ENCODE measurements at regions of chr3 and their contacts with region 1.

Region 1: GRCh38 chr3:30342319-30343060 is 263.9 kb upstream of the TGFBR2 start:
- DNase-seq: peak; percentile 99
- ATAC-seq: peak; percentile 64
- H3K4me3 ChIP-seq: peak overlapping the region; percentile 28; the same call in 1 of the 2 replicates
- H3K27ac ChIP-seq: peak overlapping the region; percentile 98
- H3K4me1 ChIP-seq: peaks cover 59% of the 10 kb centered on the region
- H3K27me3 ChIP-seq: no peaks in the 10 kb centered on the region
- CTCF ChIP-seq: no peak

Region 2: GRCh38 chr3:30122359-30122758 is 220.1 kb before region 1 on chr3:
- CTCF ChIA-PET with region 1: no interaction called
- POLR2A ChIA-PET with region 1: no interaction called
- intact Hi-C with region 1: no loop called
- DNase-seq: no peak
- ATAC-seq: no peak
- H3K4me3 ChIP-seq: no peak overlapping the region
- H3K27ac ChIP-seq: no peak overlapping the region
- H3K4me1 ChIP-seq: no peaks in the 10 kb centered on the region
- H3K27me3 ChIP-seq: no peaks in the 10 kb centered on the region
- CTCF ChIP-seq: no peak

Region 3: GRCh38 chr3:30292192-30292893 is 50.1 kb before region 1 on chr3:
- CTCF ChIA-PET with region 1: no interaction called
- POLR2A ChIA-PET with region 1: no interaction called
- intact Hi-C with region 1: loop called (anchors 2 kb)
- DNase-seq: peak; percentile 86
- ATAC-seq: peak; percentile 88
- H3K4me3 ChIP-seq: 0 out of 2 replicates have a peak overlapping the region, but pooled peaks have one; percentile 9
- H3K27ac ChIP-seq: peak overlapping the region; percentile 86
- H3K4me1 ChIP-seq: peaks cover 34% of the 10 kb centered on the region
- H3K27me3 ChIP-seq: no peaks in the 10 kb centered on the region
- CTCF ChIP-seq: no peak

Region 4: GRCh38 chr3:30324587-30324986 is 17.9 kb before region 1 on chr3:
- CTCF ChIA-PET with region 1: no interaction called
- POLR2A ChIA-PET with region 1: interaction called, 3 read pairs
- intact Hi-C with region 1: loop called (anchors 1 kb)
- DNase-seq: peak; percentile 90
- ATAC-seq: peak; percentile 98
- H3K4me3 ChIP-seq: 0 out of 2 replicates have a peak overlapping the region, but pooled peaks have one; percentile 5
- H3K27ac ChIP-seq: peak overlapping the region; percentile 91
- H3K4me1 ChIP-seq: peaks cover 17% of the 10 kb centered on the region
- H3K27me3 ChIP-seq: no peaks in the 10 kb centered on the region
- CTCF ChIP-seq: no peak

Region 5: DNA sequence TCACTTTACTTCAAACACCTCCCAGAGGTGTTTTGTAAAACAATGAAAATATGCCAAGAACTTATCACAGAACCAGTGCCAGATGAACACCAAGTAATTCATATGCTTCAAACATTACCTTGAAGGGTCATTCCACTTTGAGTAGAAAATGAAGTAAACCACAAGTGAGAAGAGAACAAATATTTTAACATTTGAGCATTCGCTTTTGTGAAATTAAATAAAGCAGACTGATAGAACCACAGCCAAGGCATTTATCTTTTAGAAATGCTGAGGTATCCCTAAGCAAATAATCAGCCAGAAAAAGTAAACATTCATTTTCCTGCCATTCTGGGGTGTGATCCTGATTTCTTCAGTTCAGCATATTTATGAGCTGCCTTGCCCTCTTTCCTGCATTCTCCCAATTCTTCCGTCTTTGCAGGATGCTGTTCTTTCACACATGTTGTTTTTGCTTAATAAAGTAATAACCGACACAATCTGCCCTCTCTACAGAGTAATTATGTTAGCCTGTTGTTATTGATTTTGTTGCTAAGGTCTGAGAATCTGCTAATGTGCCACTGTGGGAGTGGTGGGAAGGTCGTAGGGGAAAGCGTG is 28.3 kb after region 1 on chr3:
- CTCF ChIA-PET with region 1: no interaction called
- POLR2A ChIA-PET with region 1: interaction called, 3 read pairs
- intact Hi-C with region 1: loop called (anchors 2 kb)
- DNase-seq: peak; percentile 83
- ATAC-seq: peak; percentile 94
- H3K4me3 ChIP-seq: no peak overlapping the region
- H3K27ac ChIP-seq: peak overlapping the region; percentile 39
- H3K4me1 ChIP-seq: peaks cover 30% of the 10 kb centered on the region
- H3K27me3 ChIP-seq: no peaks in the 10 kb centered on the region
- CTCF ChIP-seq: no peak

Region 6: GRCh38 chr3:30538787-30539186 is 196.3 kb after region 1 on chr3:
- CTCF ChIA-PET with region 1: no interaction called
- POLR2A ChIA-PET with region 1: no interaction called
- intact Hi-C with region 1: loop called (anchors 1 kb)
- DNase-seq: peak; percentile 96
- ATAC-seq: peak; percentile 95
- H3K4me3 ChIP-seq: no peak overlapping the region; the same call in 1 of the 2 replicates
- H3K27ac ChIP-seq: peak overlapping the region; percentile 99
- H3K4me1 ChIP-seq: peaks cover 23% of the 10 kb centered on the region
- H3K27me3 ChIP-seq: no peaks in the 10 kb centered on the region
- CTCF ChIP-seq: no peak

Region 7: DNA sequence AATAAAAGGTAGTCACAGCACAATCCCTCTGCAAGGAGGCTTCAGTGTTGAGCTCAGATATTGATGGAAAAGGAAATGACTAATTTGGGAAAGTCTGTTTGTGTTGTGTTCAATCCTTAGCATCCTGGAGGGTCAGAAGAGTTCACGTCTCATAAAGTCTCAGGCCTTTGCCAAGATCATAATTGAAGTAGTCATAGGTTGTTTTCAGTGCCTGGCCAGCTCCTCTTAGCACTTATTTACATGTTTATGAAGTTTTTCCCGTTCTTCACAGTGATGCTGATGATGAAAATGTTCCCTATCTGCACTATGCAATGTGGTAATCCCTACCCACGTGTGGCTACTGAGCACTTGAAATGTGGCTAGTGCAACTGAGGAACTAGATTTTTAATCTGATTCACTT is 202.3 kb after region 1 on chr3:
- CTCF ChIA-PET with region 1: no interaction called
- POLR2A ChIA-PET with region 1: interaction called, 3 read pairs
- intact Hi-C with region 1: loop called (anchors 2 kb)
- DNase-seq: peak; percentile 95
- ATAC-seq: peak; percentile 96
- H3K4me3 ChIP-seq: no peak overlapping the region
- H3K27ac ChIP-seq: peak overlapping the region; percentile 88
- H3K4me1 ChIP-seq: peaks cover 25% of the 10 kb centered on the region
- H3K27me3 ChIP-seq: no peaks in the 10 kb centered on the region
- CTCF ChIP-seq: no peak

Measured in PC-3 (cell line).